Caco-2 (cell line): ENCODE measurements at regions of chr9 and their contacts with region 1.

Region 1: DNA sequence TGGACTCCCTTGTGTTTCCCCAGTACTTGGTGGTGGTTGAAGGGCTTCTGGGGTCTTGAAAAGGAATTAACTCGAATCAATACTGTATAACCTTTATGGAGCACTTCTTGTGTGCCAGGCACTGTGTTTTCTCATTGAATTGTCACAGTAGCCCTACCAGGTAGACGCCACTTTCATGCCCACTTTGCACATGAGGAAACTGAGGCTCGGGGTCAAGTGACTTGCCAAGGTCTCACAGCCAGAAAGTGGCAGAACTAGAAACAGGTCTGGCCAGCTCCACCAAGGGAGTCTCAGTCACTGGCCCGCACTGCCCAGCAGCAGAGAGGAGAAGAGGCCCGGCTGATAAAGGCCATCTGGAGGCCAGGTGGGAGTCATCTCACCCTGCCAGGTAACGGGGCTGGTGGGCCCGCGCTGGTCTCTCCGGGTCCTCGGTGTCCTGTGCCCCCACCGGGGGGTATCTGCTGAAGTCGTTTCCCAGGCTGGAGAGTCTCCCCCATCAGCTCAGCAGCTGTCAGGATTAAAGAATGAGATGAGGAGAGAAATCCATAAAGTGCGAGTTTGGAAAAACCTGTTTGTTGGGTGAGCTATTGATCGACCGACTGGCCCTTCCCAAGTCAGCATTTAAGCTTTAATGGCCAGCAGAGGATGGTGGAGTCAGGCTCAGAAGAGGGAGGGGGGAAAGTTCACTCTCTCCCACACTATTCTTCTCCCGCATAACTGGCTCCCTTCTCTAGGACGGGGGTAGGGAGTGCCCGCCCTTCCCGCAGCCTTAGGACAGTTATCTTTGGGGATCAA is 30.2 kb downstream of the LMX1B start:
- DNase-seq: peak; percentile 59 to 67
- H3K4me3 ChIP-seq: no peak overlapping the region
- H3K4me3 Mint-ChIP-seq: peak overlapping the region; percentile 33
- H3K27ac Mint-ChIP-seq: peak overlapping the region; percentile 64
- H3K4me1 ChIP-seq: peaks cover 47% of the 10 kb centered on the region
- H3K4me1 Mint-ChIP-seq: peaks cover 64% of the 10 kb centered on the region
- H3K27me3 ChIP-seq: no peaks in the 10 kb centered on the region
- H3K27me3 Mint-ChIP-seq: no peaks in the 10 kb centered on the region
- CTCF ChIP-seq: no peak

Region 2: GRCh38 chr9:126630458-126631237 is 13.3 kb before region 1 on chr9:
- CTCF ChIA-PET with region 1: interaction called, 11 read pairs
- POLR2A ChIA-PET with region 1: no interaction called
- intact Hi-C with region 1: no loop called
- DNase-seq: no peak
- H3K4me3 ChIP-seq: no peak overlapping the region
- H3K4me3 Mint-ChIP-seq: no peak overlapping the region
- H3K27ac Mint-ChIP-seq: no peak overlapping the region
- H3K4me1 ChIP-seq: peaks cover 19% of the 10 kb centered on the region
- H3K4me1 Mint-ChIP-seq: peaks cover 12% of the 10 kb centered on the region
- H3K27me3 ChIP-seq: no peaks in the 10 kb centered on the region
- H3K27me3 Mint-ChIP-seq: no peaks in the 10 kb centered on the region
- CTCF ChIP-seq: no peak

Region 3: GRCh38 chr9:126661521-126662220 is 17.7 kb after region 1 on chr9:
- CTCF ChIA-PET with region 1: no interaction called
- POLR2A ChIA-PET with region 1: no interaction called
- intact Hi-C with region 1: loop called (anchors 2 kb)
- DNase-seq: peak; percentile 74 to 84
- H3K4me3 ChIP-seq: no peak overlapping the region
- H3K4me3 Mint-ChIP-seq: no peak overlapping the region
- H3K27ac Mint-ChIP-seq: peak overlapping the region; percentile 26
- H3K4me1 ChIP-seq: peaks cover 46% of the 10 kb centered on the region
- H3K4me1 Mint-ChIP-seq: peaks cover 13% of the 10 kb centered on the region
- H3K27me3 ChIP-seq: no peaks in the 10 kb centered on the region
- H3K27me3 Mint-ChIP-seq: no peaks in the 10 kb centered on the region
- CTCF ChIP-seq: peak; percentile 39 to 59